OCI-LY7 (cell line): ENCODE measurements at regions of chr1 and their contacts with region 1.

Region 1: DNA sequence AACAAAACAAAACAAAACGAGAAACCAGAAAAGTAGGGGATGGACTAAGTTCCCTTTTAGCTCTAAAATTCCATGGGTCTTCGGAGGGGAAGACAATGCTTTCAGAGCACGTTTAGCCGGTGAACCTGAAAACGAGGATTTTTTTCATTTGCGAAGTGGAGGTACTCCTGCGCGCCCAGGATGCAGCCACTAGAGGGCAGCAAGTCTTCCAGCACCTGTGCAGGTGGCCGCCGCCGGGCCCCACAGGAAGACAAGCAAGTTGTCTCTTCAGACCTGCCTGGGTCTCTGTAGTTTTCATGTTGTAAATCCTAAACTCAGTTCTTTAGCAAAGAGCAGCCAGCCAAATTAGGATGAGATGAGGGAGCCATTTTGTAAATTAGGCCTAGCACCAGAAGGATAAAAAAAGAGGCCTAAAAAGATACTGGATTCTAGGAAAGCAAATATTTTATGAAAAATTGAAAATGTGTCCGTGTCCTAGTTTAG is 17.7 kb upstream of the SNX27 start:
- DNase-seq: peak; percentile 87
- H3K4me3 ChIP-seq: no peak overlapping the region
- H3K27ac ChIP-seq: no peak overlapping the region
- H3K4me1 ChIP-seq: peaks cover 5% of the 10 kb centered on the region
- CTCF ChIP-seq: peak; percentile 99

Region 2: GRCh38 chr1:151443846-151444782 is 150.1 kb before region 1 on chr1:
- CTCF ChIA-PET with region 1: no interaction called
- POLR2A ChIA-PET with region 1: no interaction called
- intact Hi-C with region 1: loop called (anchors 2 kb)
- DNase-seq: peak; percentile 80
- H3K4me3 ChIP-seq: peak overlapping the region; percentile 58
- H3K27ac ChIP-seq: peak overlapping the region; percentile 74
- H3K4me1 ChIP-seq: peaks cover 55% of the 10 kb centered on the region
- CTCF ChIP-seq: peak; percentile 96

Region 3: GRCh38 chr1:151720974-151721787 is 127.0 kb after region 1 on chr1 and contains the start of gene RIIAD1:
- CTCF ChIA-PET with region 1: interaction called, 5 read pairs
- POLR2A ChIA-PET with region 1: no interaction called
- intact Hi-C with region 1: loop called (anchors 5 kb)
- DNase-seq: peak; percentile 56
- H3K4me3 ChIP-seq: peak within 1 kb of the TSS; percentile 68
- H3K27ac ChIP-seq: no peak within 1 kb of the TSS
- H3K4me1 ChIP-seq: peaks cover 16% of the 10 kb centered on the region
- CTCF ChIP-seq: no peak; the same call in none of the 2 replicates
- total RNA-seq, gene RIIAD1: not detected in 2 replicates

Region 4: GRCh38 chr1:151739590-151740375 is 145.6 kb after region 1 on chr1:
- CTCF ChIA-PET with region 1: no interaction called
- POLR2A ChIA-PET with region 1: no interaction called
- intact Hi-C with region 1: loop called (anchors 1 kb)
- DNase-seq: no peak
- H3K4me3 ChIP-seq: no peak overlapping the region
- H3K27ac ChIP-seq: no peak overlapping the region
- H3K4me1 ChIP-seq: no peaks in the 10 kb centered on the region
- CTCF ChIP-seq: no peak

Region 5: GRCh38 chr1:151832318-151832975 is 238.3 kb after region 1 on chr1:
- CTCF ChIA-PET with region 1: interaction called, 13 read pairs
- POLR2A ChIA-PET with region 1: no interaction called
- intact Hi-C with region 1: loop called (anchors 1 kb)
- DNase-seq: no peak
- H3K4me3 ChIP-seq: no peak overlapping the region
- H3K27ac ChIP-seq: no peak overlapping the region
- H3K4me1 ChIP-seq: peaks cover 6% of the 10 kb centered on the region
- CTCF ChIP-seq: no peak

Region 6: DNA sequence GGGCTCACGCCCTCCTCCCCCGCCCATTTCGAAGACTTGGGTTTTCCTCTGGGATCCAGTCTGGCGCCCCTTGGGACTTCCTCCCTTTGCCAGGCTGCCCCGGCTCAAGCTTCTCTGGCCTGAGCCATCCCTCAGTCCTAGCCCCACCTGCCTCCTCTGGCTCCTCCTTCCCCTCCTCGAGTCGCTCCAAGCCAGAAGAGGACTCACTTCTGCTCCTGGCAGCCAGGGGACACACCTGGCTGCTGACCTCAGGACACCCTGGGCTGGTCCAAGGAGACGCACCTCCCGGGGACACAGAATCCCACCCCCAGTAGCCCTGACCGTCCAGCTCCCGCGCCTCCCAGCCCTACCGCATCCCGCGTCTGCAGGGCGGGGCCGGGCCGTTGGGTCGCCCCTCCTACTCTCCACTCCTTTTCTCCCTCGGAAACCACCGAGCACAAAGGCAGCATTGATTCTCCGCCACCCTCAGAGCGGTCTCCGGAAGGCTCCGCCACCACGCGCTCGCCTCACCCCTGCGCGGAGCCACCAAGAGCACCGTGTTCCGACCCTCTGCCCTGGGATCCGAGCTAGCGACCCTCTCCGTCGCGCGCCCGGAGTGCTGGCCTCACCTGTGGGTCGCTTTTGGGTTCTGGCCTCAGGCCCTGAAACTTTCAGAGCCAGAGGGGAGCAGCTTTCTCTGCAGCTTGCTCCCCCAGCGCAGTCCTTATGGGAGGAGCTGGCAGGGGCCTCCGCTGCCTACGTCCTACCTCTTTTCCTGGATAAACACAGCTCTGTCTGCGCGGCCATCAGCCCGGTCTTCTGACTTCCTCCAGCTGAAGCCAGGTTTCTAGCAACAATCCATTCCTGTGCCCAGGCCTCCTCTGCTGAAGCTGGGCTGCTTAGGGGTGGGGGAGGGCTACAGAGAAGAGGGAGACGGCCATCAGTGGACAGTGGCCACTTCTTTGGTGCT is 245.5 kb after region 1 on chr1 and contains the start of gene C2CD4D:
- CTCF ChIA-PET with region 1: no interaction called
- POLR2A ChIA-PET with region 1: no interaction called
- intact Hi-C with region 1: loop called (anchors 1 kb)
- DNase-seq: no peak
- H3K4me3 ChIP-seq: no peak within 1 kb of the TSS
- H3K27ac ChIP-seq: no peak within 1 kb of the TSS
- H3K4me1 ChIP-seq: peaks cover 16% of the 10 kb centered on the region
- CTCF ChIP-seq: no peak
- total RNA-seq, gene C2CD4D: not detected in 2 replicates